Activated CD8-positive, alpha-beta T cell treated with anti-CD3 and anti-CD28 coated beads for 36 hours (primary cell): ENCODE measurements at regions of chr9 and their contacts with region 1.

Region 1: GRCh38 chr9:96854073-96854876 is at the start of gene ZNF782:
- DNase-seq: peak; percentile 91
- ATAC-seq: peak; percentile 89
- H3K4me3 Mint-ChIP-seq: peak within 1 kb of the TSS; percentile 96
- H3K27ac Mint-ChIP-seq: peak within 1 kb of the TSS; percentile 99
- H3K4me1 Mint-ChIP-seq: peaks cover 59% of the 10 kb centered on the region
- H3K27me3 Mint-ChIP-seq: peaks cover 15% of the 10 kb centered on the region
- CTCF ChIP-seq: no peak
- total RNA-seq, gene ZNF782: 4.7 to 5.0 TPM

Region 2: DNA sequence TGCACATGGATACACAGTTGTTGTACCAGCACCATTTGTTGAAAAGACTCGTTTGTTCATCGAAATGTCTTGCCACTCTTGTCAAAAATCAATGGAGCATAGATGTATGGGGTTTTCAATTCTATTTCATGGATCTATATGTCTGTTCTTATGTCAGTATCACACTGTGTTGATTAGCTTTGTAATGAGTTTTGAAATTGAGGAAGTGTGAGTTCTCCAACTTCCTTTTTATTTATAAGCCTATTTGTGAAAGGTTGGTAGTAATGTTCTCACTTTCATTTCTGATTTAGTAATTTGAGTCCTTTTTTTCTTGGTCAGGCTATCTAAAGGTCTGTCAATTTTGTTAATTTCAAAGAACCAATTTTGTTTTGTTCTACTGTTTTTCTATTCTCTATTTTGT is 102.5 kb before region 1 on chr9:
- CTCF ChIA-PET with region 1: no interaction called
- POLR2A ChIA-PET with region 1: no interaction called
- intact Hi-C with region 1: no loop called
- DNase-seq: no peak
- ATAC-seq: no peak
- H3K4me3 Mint-ChIP-seq: no peak overlapping the region
- H3K27ac Mint-ChIP-seq: no peak overlapping the region
- H3K4me1 Mint-ChIP-seq: no peaks in the 10 kb centered on the region
- H3K27me3 Mint-ChIP-seq: no peaks in the 10 kb centered on the region
- CTCF ChIP-seq: no peak

Region 3: DNA sequence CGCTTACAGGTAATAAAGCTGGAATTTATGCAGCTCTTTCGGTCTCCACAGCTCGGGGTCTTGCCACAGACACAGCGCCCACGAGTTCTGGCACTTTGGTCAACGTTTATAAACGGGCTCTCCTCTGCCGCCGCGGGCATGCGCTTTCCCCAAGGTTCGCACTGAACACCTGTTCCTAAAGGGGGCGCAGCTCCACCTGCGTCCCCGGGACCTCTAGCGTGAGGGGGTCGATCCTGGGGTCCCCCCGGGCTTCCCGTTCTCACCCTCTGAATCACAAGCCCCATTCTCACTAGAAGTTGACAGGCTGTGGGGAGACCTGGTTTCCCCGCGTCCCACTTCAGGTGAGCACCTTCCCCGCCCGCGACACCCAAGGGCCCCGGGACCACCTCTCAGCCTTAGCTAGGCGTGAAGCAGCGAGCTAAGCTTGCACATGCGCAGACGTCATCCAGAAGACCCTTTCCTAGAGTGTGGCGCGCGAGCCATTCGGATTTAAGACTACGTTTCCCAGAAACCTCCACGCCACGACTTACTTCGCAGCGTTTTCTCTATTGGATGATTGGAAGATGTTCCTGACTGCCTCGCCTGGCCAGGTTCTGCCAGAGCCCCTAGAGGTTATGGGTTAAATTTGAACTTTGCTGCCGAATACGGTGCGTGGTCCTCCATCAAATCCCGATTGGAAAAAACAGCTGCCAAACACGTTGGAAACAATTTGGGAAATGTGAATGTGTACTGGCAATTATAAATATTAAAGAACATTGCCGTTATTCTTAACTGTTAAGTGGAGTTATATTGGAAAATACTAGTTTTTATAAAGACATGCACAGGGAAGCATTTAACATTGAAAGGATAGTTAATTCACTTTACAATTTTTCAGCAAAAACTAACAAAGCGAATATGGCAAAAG is 21.4 kb after region 1 on chr9:
- CTCF ChIA-PET with region 1: interaction called, 43 read pairs
- POLR2A ChIA-PET with region 1: interaction called, 3 read pairs
- intact Hi-C with region 1: no loop called
- DNase-seq: peak; percentile 81
- ATAC-seq: peak; percentile 71
- H3K4me3 Mint-ChIP-seq: peak overlapping the region; percentile 76
- H3K27ac Mint-ChIP-seq: peak overlapping the region; percentile 83
- H3K4me1 Mint-ChIP-seq: peaks cover 23% of the 10 kb centered on the region
- H3K27me3 Mint-ChIP-seq: peaks cover 31% of the 10 kb centered on the region
- CTCF ChIP-seq: no peak

Region 4: GRCh38 chr9:97237951-97238851 is 383.9 kb after region 1 on chr9:
- CTCF ChIA-PET with region 1: interaction called, 20 read pairs
- POLR2A ChIA-PET with region 1: no interaction called
- intact Hi-C with region 1: no loop called
- DNase-seq: peak; percentile 89
- ATAC-seq: peak; percentile 94
- H3K4me3 Mint-ChIP-seq: peak overlapping the region; percentile 81
- H3K27ac Mint-ChIP-seq: peak overlapping the region; percentile 95
- H3K4me1 Mint-ChIP-seq: peaks cover 23% of the 10 kb centered on the region
- H3K27me3 Mint-ChIP-seq: no peaks in the 10 kb centered on the region
- CTCF ChIP-seq: no peak

Region 5: GRCh38 chr9:97398999-97399758 is 544.9 kb after region 1 on chr9:
- CTCF ChIA-PET with region 1: interaction called, 25 read pairs
- POLR2A ChIA-PET with region 1: no interaction called
- intact Hi-C with region 1: loop called (anchors 2 kb)
- DNase-seq: peak; percentile 80
- ATAC-seq: peak; percentile 80
- H3K4me3 Mint-ChIP-seq: no peak overlapping the region
- H3K27ac Mint-ChIP-seq: no peak overlapping the region
- H3K4me1 Mint-ChIP-seq: peaks cover 16% of the 10 kb centered on the region
- H3K27me3 Mint-ChIP-seq: peaks cover 4% of the 10 kb centered on the region
- CTCF ChIP-seq: peak; percentile 98

Region 6: GRCh38 chr9:97615439-97616072 is 761.3 kb after region 1 on chr9:
- CTCF ChIA-PET with region 1: interaction called, 15 read pairs
- POLR2A ChIA-PET with region 1: no interaction called
- intact Hi-C with region 1: no loop called
- DNase-seq: peak; percentile 72
- ATAC-seq: peak; percentile 44
- H3K4me3 Mint-ChIP-seq: no peak overlapping the region
- H3K27ac Mint-ChIP-seq: no peak overlapping the region
- H3K4me1 Mint-ChIP-seq: peaks cover 21% of the 10 kb centered on the region
- H3K27me3 Mint-ChIP-seq: no peaks in the 10 kb centered on the region
- CTCF ChIP-seq: peak; percentile 86